ENCODE measurements at regions of chr9 and their contacts with region 1.

Region 1: GRCh38 chr9:11686733-11687132 is 1006.5 kb upstream of the TYRP1 start:
- DNase-seq: no peak
- H3K4me3 ChIP-seq: no peak overlapping the region
- H3K27ac ChIP-seq: no peak overlapping the region
- H3K4me1 ChIP-seq: no peaks in the 10 kb centered on the region
- H3K27me3 ChIP-seq: no peaks in the 10 kb centered on the region
- CTCF ChIP-seq: no peak
- POLR2A ChIP-seq: no peak

Region 2: DNA sequence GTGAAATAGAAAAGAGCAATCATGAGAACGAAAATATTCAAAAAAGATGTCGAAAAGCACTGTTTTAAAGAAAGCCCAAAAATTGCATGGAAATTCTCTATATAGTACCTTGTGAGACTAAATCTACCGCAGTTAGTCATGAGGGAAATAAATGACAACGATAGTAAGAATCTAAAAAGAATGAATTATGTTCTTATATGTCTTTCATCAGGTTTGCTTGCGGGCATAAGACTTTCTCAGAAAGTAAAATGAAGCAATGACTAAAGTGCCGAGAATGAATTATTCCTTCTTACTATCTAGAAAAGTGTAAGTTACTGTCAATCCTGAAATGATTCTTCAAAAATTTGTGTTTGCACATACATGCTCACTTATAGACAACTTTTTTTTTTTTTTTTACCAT is 1100.3 kb before region 1 on chr9:
- intact Hi-C with region 1: loop called (anchors 5 kb)
- DNase-seq: no peak
- H3K4me3 ChIP-seq: no peak overlapping the region
- H3K27ac ChIP-seq: no peak overlapping the region
- H3K4me1 ChIP-seq: no peaks in the 10 kb centered on the region
- H3K27me3 ChIP-seq: no peaks in the 10 kb centered on the region
- CTCF ChIP-seq: no peak
- POLR2A ChIP-seq: no peak

Region 3: DNA sequence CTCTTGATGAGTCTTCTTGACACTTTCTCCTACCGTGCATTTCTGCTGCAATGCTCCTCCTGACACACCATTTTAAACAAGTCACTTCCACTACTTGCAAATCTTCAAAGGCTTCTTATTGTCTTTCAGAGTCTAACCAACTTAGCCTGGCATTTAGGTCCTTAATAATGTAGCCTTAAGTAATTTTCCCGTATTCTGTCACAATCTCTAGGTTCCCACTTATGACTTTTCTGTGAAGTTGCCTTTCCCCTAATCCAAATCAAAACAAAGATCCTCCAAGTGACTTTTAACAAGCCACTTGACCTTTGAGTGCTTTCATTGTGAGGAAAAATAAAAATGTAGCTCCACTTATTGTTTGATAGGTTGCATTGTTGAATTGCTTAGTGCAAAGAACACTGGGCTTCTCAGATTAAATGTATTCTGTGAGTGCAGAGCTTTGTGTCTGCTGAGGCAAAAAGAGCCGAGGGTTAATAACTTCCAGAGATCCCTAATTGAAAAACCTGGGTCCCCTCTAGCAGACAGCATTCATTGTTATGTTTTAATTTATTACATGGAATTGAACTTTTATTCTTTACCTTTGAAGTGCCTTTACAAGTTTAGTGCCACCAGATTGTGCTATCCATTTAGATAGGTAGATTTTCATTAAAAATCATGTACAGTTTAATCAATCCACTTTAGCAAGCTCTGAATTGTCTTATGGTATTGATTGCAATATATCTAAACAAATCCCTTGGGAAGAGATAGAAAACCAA is 664.7 kb after region 1 on chr9:
- intact Hi-C with region 1: loop called (anchors 5 kb)
- DNase-seq: no peak
- H3K4me3 ChIP-seq: no peak overlapping the region
- H3K27ac ChIP-seq: no peak overlapping the region
- H3K4me1 ChIP-seq: no peaks in the 10 kb centered on the region
- H3K27me3 ChIP-seq: no peaks in the 10 kb centered on the region
- CTCF ChIP-seq: no peak
- POLR2A ChIP-seq: no peak

Measured in breast epithelium (tissue), 4 donors.